Gastrocnemius medialis (tissue), 4 donors: ENCODE measurements at regions of chr17 and their contacts with region 1.

Region 1: DNA sequence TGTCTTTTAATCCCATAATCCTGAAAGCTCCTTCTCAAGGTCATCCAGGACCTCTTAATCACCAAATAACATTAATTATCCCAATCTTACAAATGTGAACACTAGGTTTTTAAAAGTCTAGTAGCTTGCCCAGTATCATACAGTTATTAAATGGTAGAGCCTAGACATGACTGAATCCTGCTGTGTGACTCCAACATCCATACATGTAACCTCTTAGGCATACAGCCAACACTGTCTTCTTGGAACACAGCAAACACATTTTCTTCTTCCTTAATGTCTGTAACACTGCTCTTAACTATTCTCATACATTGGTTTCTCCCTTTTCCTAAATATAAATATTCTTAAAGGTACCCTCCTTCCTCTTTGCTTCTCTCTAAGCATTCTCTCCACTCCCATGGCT is 13.7 kb downstream of the BRIP1 start:
- DNase-seq: no peak
- ATAC-seq: no peak
- H3K4me3 ChIP-seq: no peak overlapping the region
- H3K27ac ChIP-seq: no peak overlapping the region
- H3K4me1 ChIP-seq: no peaks in the 10 kb centered on the region
- H3K27me3 ChIP-seq: no peaks in the 10 kb centered on the region
- CTCF ChIP-seq: no peak
- POLR2A ChIP-seq: no peak

Region 2: GRCh38 chr17:61635913-61636432 is 213.7 kb before region 1 on chr17:
- in situ Hi-C with region 1: loop called in 1 of 4 experiments (anchors 10 kb)
- intact Hi-C with region 1: no loop called
- DNase-seq: no peak
- ATAC-seq: no peak
- H3K4me3 ChIP-seq: no peak overlapping the region
- H3K27ac ChIP-seq: no peak overlapping the region
- H3K4me1 ChIP-seq: no peaks in the 10 kb centered on the region
- H3K27me3 ChIP-seq: no peaks in the 10 kb centered on the region
- CTCF ChIP-seq: peak in 1 of 5 experiments; percentile 16
- POLR2A ChIP-seq: no peak